ENCODE measurements at regions of chr19 and their contacts with region 1.

Region 1: GRCh38 chr19:40662921-40663694 is 27.3 kb downstream of the NUMBL start:
- DNase-seq: peak; percentile 97
- H3K4me3 ChIP-seq: peak overlapping the region; percentile 64 to 85 (median 68)
- H3K27ac ChIP-seq: peak overlapping the region; percentile 84 to 93 (median 88)
- H3K4me1 ChIP-seq: peaks cover 14 to 24% (median 21%) of the 10 kb centered on the region in 4 donors
- H3K27me3 ChIP-seq: no peaks in the 10 kb centered on the region
- CTCF ChIP-seq: peak in 2 of 3 experiments; percentile 99 to 100
- EP300 ChIP-seq: no peak
- POLR2A ChIP-seq: peak; percentile 3

Region 2: DNA sequence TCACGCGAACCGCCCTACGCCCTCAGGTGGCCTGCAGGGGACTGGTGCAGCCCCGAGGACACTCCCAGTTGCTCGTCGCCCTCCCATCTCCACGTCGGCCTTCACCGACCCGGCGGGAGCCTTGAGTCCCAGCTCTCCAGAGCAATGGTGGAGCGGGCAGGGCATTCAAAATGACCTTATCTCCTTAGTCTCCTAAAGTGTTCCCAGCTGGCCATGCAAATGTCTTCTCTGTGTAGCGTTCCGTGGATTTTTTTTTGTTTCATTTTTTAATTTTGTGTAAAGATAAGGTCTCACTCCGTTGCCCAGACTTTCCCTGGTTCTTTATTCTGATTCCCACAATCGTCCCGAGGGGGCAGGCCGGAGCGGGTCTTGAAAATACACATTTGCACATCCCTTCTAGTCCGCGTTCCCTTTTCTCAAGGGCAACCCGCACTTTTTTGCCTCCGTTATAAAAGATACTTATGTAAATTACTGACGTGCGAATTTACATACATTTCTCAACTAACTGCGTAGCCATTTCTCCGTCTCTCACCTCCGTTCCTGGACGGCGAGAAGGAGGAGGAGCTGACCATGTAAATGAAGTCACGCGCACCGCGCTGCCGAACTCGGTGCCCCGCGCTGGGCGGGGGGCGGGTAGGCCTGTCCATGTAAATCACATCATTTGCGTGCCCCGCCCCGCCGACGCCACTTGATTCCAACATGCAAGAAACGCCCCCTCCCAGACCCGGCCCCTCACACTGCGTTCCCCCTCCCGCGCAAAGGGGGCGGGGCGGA is 135.3 kb after region 1 on chr19:
- intact Hi-C with region 1: loop called (anchors 5 kb)
- DNase-seq: peak; percentile 100
- H3K4me3 ChIP-seq: peak overlapping the region; percentile 77 to 99 (median 98)
- H3K27ac ChIP-seq: peak overlapping the region; percentile 95 to 99 (median 96)
- H3K4me1 ChIP-seq: peaks cover 40 to 47% (median 45%) of the 10 kb centered on the region in 4 donors
- H3K27me3 ChIP-seq: no peaks in the 10 kb centered on the region
- CTCF ChIP-seq: peak; percentile 36 to 57 (median 52)
- EP300 ChIP-seq: no peak
- POLR2A ChIP-seq: no peak

Region 3: DNA sequence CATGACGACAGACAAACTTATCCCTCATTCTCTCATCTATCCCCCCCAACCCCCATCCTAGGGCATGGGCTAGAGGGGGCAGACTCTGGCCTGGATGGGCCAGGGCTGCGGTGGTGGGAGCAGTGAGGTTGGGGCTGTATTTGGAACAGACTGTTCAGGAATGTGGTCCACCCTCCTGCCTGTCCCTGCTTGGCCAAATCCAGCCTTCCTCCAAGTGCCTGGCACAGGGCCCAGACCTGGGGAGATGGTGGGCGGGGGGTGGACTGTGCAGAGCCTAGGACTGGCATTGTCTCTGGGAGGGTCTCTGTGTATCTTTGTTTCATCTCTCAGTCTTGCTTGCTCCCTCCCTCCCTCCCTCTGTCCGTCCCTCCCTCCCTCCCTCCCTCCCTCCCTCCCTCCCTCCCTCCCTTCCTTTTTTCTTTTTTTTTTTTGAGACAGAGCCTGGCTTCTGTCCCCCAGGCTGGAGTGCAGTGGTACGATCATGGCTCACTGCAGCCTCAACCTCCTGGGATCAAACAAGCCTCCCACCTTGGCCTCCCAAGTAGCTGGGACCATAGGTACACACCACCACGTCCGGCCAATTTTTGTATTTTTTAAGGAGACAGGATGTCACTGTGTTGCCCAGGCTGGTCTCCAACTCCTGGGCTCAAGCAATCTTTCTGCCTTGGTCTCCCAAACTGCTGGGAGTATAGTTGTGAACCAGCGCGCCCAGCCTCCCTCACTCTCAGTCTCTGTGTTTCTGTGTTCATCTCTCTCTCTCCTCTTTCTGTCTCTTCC is 150.3 kb after region 1 on chr19:
- intact Hi-C with region 1: loop called (anchors 2 kb)
- DNase-seq: no peak
- H3K4me3 ChIP-seq: no peak overlapping the region
- H3K27ac ChIP-seq: peak overlapping the region in 1 of 4 donors; percentile 36
- H3K4me1 ChIP-seq: peaks cover 41 to 56% (median 55%) of the 10 kb centered on the region in 4 donors
- H3K27me3 ChIP-seq: no peaks in the 10 kb centered on the region
- CTCF ChIP-seq: no peak
- EP300 ChIP-seq: no peak
- POLR2A ChIP-seq: no peak

Region 4: DNA sequence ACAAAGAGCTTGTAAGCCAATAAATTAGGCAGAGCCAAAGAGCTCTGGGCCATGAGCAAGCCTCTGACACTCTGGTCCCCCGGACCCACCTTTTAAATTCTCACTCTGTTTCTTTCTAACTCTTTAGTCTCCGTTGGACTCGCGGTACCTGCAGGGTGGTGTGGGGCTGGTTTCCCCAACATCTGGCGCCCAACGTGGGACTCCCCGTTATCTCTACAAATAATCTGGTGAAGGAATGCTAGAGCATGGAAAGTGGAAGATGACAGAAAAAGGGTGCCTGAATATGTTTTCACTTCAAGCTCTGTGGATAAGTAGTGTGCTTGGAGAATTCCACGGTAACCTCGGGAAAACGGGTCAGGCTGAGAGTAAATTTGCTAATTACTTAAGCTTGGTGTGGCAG is 291.5 kb after region 1 on chr19:
- intact Hi-C with region 1: no loop called
- DNase-seq: no peak
- H3K4me3 ChIP-seq: no peak overlapping the region
- H3K27ac ChIP-seq: no peak overlapping the region
- H3K4me1 ChIP-seq: no peaks in the 10 kb centered on the region
- H3K27me3 ChIP-seq: peaks cover 0 to 13% (median 0%) of the 10 kb centered on the region in 4 donors
- CTCF ChIP-seq: no peak
- EP300 ChIP-seq: no peak
- POLR2A ChIP-seq: no peak

Region 5: DNA sequence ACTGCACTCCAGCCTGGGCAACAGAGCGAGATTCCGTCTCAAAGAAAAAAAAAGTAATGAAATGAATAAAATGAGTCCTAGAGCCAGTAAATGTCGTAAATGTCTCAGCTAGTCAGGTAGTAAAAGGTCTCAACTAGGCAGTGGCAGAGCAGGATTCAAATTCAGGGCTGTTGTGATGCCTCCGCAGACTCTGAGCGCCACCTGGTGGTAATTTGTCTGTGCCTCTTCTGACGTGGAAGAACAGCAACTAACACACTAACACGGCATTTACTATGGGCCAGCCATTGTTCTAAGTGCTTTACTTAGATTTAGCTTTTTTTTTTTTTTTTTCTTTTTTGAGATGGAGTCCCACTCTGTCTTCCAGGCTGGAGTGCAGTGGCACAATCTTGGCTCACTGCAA is 481.3 kb after region 1 on chr19:
- intact Hi-C with region 1: loop called (anchors 10 kb)
- DNase-seq: no peak
- H3K4me3 ChIP-seq: no peak overlapping the region
- H3K27ac ChIP-seq: no peak overlapping the region
- H3K4me1 ChIP-seq: no peaks in the 10 kb centered on the region
- H3K27me3 ChIP-seq: peaks cover 0 to 33% (median 0%) of the 10 kb centered on the region in 4 donors
- CTCF ChIP-seq: peak; percentile 80 to 82 (median 82)
- EP300 ChIP-seq: no peak
- POLR2A ChIP-seq: no peak

Measured in esophagus muscularis mucosa (tissue), 4 donors.